ENCODE measurements at regions of chr3 and their contacts with region 1.

Region 1: DNA sequence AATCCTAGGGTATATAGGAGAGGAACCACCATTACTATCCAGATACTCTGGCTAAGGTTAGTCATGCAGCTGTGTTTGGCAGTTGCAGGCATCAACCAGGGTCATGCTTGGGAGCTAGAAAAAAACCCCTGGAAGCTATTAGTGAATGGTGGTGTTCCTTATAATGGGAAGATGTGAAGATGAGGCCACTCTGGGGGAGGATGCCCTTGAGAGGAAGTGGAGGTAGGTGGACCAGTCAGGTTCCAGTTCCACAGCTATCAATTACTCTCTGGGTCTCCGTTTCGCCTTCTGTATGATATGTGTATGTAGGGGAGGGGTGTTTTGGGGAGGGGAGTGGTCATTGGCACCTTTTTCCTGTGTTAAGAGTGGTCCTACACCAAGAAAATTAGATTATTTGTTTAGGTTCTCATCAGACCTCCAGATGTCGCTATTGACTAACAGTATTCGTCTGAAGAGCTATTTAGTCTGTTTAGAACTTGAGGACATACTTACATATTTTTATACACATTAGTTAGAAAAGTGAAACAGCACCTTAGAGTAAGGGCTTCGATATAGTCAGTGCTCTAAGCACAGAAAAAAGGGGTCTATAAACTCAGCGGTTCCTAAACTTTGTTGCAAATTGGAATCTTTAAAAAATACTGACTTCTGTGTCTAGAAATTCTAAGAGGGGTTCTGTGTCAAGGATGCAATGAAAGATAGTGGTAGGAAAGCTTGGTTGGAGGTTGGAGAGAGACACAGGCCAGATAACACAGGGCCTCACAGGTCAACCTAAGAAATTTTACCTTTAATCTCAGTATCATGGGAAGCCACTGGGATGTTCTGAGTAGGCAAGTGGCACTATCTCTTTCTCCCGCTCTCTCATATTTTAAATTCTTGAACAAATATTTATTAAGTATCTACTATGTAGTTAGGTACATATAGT is 9.1 kb upstream of the HPS3 start:
- DNase-seq: peak; percentile 81
- H3K4me3 ChIP-seq: no peak overlapping the region
- H3K27ac ChIP-seq: no peak overlapping the region
- H3K4me1 ChIP-seq: peaks cover 4% of the 10 kb centered on the region
- CTCF ChIP-seq: peak; percentile 94

Region 2: GRCh38 chr3:148861277-148861869 is 258.9 kb before region 1 on chr3:
- CTCF ChIA-PET with region 1: no interaction called
- POLR2A ChIA-PET with region 1: no interaction called
- intact Hi-C with region 1: no loop called
- DNase-seq: peak; percentile 55
- H3K4me3 ChIP-seq: no peak overlapping the region
- H3K27ac ChIP-seq: no peak overlapping the region
- H3K4me1 ChIP-seq: no peaks in the 10 kb centered on the region
- CTCF ChIP-seq: peak; percentile 94

Region 3: DNA sequence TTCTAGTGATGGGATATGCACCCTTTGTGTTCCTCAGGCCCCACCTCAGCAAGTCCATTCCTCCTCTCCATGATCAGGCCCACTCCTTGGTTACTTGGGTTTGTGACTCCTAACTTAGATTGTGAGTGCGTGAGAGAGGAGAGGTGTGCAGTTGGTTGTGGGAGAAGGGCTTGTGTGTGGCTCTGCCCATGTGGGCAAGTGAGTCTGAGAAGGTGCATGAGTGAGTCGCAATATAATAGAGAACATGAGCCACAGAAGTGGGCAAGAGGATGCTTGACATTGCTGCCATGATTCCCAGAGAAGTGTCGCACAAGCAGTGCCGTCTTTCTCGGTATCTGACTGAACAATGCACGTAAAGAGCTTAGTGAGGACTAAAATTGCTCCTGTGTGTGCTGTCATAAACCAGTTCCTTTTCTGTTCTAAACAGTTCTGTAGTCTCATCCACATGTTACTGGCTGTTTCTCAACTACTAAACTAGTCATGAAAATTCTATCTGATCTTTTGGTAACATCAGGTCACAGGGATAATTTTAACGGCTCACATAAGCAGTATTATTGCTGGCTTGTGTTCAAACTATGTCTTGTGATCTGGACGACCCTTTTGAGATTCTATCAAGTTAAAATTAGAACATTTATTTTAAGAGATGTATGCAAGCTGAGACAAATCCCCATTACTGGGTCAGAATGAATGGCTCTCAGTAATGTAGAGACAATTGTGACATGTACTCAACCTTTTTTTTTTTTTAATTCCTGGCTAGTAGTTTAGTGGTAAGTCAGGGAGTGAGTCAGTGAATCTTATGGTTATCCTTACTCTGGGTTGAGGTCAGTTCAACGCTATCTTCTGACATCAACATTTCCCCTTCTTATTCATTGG is 103.4 kb before region 1 on chr3:
- CTCF ChIA-PET with region 1: no interaction called
- POLR2A ChIA-PET with region 1: no interaction called
- intact Hi-C with region 1: no loop called
- DNase-seq: no peak
- H3K4me3 ChIP-seq: no peak overlapping the region
- H3K27ac ChIP-seq: no peak overlapping the region
- H3K4me1 ChIP-seq: no peaks in the 10 kb centered on the region
- CTCF ChIP-seq: no peak

Region 4: GRCh38 chr3:149273096-149273751 is 152.9 kb after region 1 on chr3:
- CTCF ChIA-PET with region 1: interaction called, 13 read pairs
- POLR2A ChIA-PET with region 1: interaction called, 8 read pairs
- intact Hi-C with region 1: loop called (anchors 1 kb)
- DNase-seq: peak; percentile 86
- H3K4me3 ChIP-seq: no peak overlapping the region
- H3K27ac ChIP-seq: no peak overlapping the region
- H3K4me1 ChIP-seq: peaks cover 17% of the 10 kb centered on the region
- CTCF ChIP-seq: peak; percentile 100

Measured in OCI-LY7 (cell line).